ENCODE measurements at regions of chr2 and their contacts with region 1.

Region 1: DNA sequence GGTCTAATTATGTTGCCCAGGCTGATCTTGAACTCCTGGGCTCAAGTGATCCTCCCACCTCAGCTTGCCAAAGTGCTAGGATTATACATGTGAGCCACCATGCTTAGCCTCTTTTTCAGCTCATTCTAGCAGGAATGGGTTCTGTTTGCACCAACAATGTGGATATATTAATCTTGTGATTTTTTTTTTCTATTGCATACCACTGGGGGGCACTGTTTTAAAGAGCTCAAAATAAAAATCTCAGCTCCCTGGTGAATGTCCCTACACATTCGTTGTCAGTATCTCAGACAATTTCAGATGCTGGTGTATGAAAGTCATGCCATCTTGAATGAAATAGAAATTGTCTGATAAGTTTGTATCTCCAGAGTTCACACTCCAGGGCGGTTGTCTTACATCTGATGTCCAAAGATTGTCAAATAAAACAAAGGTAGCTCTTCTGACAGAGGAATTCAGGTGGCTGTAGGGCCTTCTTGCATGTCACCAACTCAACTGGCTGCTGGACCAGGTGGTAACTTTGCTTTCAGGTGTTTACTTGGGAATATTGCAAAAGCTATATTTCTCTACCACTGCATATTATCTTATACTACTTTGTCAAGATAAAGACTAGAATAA is 3.1 kb upstream of the MATN3 start:
- DNase-seq: no peak
- ATAC-seq: no peak
- H3K4me3 Mint-ChIP-seq: no peak overlapping the region
- H3K27ac Mint-ChIP-seq: no peak overlapping the region
- H3K4me1 Mint-ChIP-seq: peaks cover 8% of the 10 kb centered on the region
- H3K27me3 Mint-ChIP-seq: peaks cover 33% of the 10 kb centered on the region
- CTCF ChIP-seq: peak; percentile 64

Region 2: DNA sequence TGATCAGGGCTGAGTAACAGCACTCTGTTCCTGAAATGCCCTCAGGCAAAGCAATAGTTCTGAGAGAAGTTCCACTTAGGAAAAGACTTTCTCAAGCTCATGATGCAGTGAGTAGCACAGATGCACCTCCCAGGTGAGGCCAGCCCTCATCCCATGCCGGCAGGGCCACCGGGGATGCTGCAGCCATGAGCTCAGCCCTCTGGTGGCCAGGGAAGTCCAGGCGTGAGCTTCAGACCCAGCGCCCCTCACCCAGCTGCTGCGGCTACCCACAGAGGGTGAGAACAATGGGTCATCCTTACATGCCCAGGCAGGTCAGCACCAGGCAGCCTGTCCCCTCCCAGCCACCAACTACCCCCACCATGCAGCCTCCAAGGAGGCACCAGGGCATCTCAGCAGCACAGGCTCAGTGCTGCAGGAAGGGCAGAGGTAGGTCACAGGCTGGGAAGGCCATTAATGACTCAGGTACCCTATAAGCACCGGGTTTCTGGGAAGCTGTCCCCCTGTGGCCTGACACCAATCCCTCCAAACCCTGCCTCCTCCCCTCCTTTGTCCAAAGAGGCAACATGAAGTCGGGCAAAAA is 164.4 kb before region 1 on chr2:
- CTCF ChIA-PET with region 1: no interaction called
- POLR2A ChIA-PET with region 1: no interaction called
- intact Hi-C with region 1: no loop called
- DNase-seq: no peak
- ATAC-seq: no peak
- H3K4me3 Mint-ChIP-seq: no peak overlapping the region
- H3K27ac Mint-ChIP-seq: no peak overlapping the region
- H3K4me1 Mint-ChIP-seq: no peaks in the 10 kb centered on the region
- H3K27me3 Mint-ChIP-seq: peaks cover 5% of the 10 kb centered on the region
- CTCF ChIP-seq: no peak

Region 3: GRCh38 chr2:19971691-19972090 is 43.9 kb before region 1 on chr2:
- CTCF ChIA-PET with region 1: interaction called, 11 read pairs
- POLR2A ChIA-PET with region 1: no interaction called
- intact Hi-C with region 1: no loop called
- DNase-seq: peak; percentile 27
- ATAC-seq: peak; percentile 73
- H3K4me3 Mint-ChIP-seq: no peak overlapping the region
- H3K27ac Mint-ChIP-seq: peak overlapping the region; percentile 19
- H3K4me1 Mint-ChIP-seq: peaks cover 9% of the 10 kb centered on the region
- H3K27me3 Mint-ChIP-seq: no peaks in the 10 kb centered on the region
- CTCF ChIP-seq: no peak

Region 4: GRCh38 chr2:20001361-20001863 is 14.2 kb before region 1 on chr2:
- CTCF ChIA-PET with region 1: interaction called, 26 read pairs
- POLR2A ChIA-PET with region 1: no interaction called
- intact Hi-C with region 1: no loop called
- DNase-seq: no peak
- ATAC-seq: no peak
- H3K4me3 Mint-ChIP-seq: no peak overlapping the region
- H3K27ac Mint-ChIP-seq: no peak overlapping the region
- H3K4me1 Mint-ChIP-seq: no peaks in the 10 kb centered on the region
- H3K27me3 Mint-ChIP-seq: peaks cover 7% of the 10 kb centered on the region
- CTCF ChIP-seq: no peak

Region 5: DNA sequence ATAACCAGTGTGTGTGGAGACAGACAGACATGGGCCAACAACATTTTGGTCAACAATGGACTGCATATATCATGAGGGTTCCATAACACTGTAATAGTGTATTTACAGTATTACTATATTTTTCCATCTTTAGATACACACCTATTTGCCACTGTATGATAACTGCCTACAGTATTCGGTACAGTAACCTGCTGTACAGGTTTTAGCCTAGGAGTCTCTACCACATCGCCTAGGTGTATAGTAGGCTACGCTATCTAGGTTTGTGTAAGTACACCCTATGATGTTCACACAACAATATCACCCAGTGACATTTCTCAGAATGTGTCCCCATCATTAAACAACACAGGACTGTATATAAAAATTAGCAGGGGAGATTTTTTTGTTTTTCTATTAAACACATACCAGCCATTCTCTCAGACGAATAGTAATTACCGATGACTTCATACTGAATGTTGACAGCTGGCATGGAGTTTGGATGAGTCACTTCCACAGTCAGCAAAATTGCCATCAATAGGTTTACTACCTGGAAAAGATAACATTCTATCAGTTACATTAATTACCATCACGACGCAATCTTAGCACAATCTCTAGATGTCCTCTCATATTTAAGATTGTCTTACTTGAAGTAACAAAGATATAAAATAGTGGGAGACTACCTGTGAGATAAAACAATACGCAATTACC is 25.1 kb after region 1 on chr2:
- CTCF ChIA-PET with region 1: interaction called, 37 read pairs
- POLR2A ChIA-PET with region 1: no interaction called
- intact Hi-C with region 1: no loop called
- DNase-seq: no peak
- ATAC-seq: no peak
- H3K4me3 Mint-ChIP-seq: no peak overlapping the region
- H3K27ac Mint-ChIP-seq: no peak overlapping the region
- H3K4me1 Mint-ChIP-seq: peaks cover 6% of the 10 kb centered on the region
- H3K27me3 Mint-ChIP-seq: no peaks in the 10 kb centered on the region
- CTCF ChIP-seq: no peak

Region 6: GRCh38 chr2:20062615-20063545 is 47.3 kb after region 1 on chr2:
- CTCF ChIA-PET with region 1: interaction called, 12 read pairs
- POLR2A ChIA-PET with region 1: no interaction called
- intact Hi-C with region 1: no loop called
- DNase-seq: peak; percentile 58
- ATAC-seq: peak; percentile 20
- H3K4me3 Mint-ChIP-seq: no peak overlapping the region
- H3K27ac Mint-ChIP-seq: no peak overlapping the region
- H3K4me1 Mint-ChIP-seq: no peaks in the 10 kb centered on the region
- H3K27me3 Mint-ChIP-seq: peaks cover 2% of the 10 kb centered on the region
- CTCF ChIP-seq: no peak

Region 7: DNA sequence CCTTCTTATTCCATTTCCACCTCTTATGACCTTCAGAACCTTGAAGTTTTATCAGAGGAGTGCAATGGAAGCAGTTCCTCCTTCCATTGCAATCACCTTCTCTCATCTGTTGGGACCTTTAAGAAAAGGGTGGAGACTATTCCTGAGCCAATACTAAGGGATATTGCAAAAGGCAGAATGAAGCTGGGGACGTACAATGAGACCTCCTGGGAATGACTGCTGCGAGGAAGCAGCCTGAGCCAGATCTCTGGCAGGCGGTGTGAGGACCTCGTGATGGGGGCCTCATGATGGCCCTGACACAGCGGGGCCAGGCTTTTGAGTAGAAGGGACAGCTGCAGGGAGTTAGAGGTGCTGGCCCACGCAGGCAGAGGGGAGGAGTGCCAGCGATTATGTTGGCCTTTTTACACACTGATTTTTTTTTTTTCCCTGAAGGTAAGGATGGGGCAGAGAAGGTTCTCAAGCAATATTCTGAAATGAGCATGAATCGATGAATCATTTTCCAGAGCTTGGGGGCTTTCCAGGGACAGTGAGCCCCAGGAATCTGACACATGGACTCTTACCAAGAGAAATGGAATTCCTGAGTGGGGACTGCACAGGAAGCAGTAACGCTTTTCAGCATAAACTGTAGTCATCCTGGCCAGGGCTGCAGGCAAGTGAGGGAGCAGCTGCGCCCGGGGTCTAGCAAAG is 75.9 kb after region 1 on chr2:
- CTCF ChIA-PET with region 1: interaction called, 31 read pairs
- POLR2A ChIA-PET with region 1: no interaction called
- intact Hi-C with region 1: no loop called
- DNase-seq: no peak
- ATAC-seq: no peak
- H3K4me3 Mint-ChIP-seq: no peak overlapping the region
- H3K27ac Mint-ChIP-seq: no peak overlapping the region
- H3K4me1 Mint-ChIP-seq: no peaks in the 10 kb centered on the region
- H3K27me3 Mint-ChIP-seq: peaks cover 11% of the 10 kb centered on the region
- CTCF ChIP-seq: no peak

Region 8: DNA sequence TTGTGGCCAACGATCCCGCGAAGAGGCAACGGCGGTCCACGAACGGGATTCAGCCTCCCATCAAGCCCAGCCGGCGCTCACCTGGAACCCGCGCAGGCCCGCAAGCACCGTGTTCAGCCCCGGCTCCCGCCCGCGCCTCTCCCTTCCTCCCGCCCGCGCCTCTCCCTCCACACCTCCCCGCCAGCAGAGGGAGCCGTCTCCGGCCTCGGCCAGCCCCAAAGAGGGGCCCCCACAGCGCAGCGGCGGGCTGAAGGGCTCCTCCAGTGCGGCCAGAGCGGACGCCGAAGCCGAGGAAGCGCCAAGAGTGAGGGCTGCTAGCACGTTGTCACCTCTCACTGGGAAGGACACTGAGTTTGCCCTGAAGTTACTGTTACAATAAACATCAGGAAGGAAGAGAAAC is 91.2 kb after region 1 on chr2:
- CTCF ChIA-PET with region 1: interaction called, 38 read pairs
- POLR2A ChIA-PET with region 1: no interaction called
- intact Hi-C with region 1: no loop called
- DNase-seq: peak; percentile 65
- ATAC-seq: peak; percentile 80
- H3K4me3 Mint-ChIP-seq: peak overlapping the region; percentile 64
- H3K27ac Mint-ChIP-seq: no peak overlapping the region
- H3K4me1 Mint-ChIP-seq: peaks cover 3% of the 10 kb centered on the region
- H3K27me3 Mint-ChIP-seq: peaks cover 8% of the 10 kb centered on the region
- CTCF ChIP-seq: peak; percentile 15

Measured in activated CD8-positive, alpha-beta T cell treated with anti-CD3 and anti-CD28 coated beads for 36 hours (primary cell).